ENCODE measurements at regions of chr5 and their contacts with region 1.

Region 1: GRCh38 chr5:134738133-134738962 is at the start of gene CAMLG:
- DNase-seq: peak; percentile 96 to 97 (median 97)
- H3K4me3 ChIP-seq: peak within 1 kb of the TSS; percentile 87 to 97
- H3K4me3 Mint-ChIP-seq: peak within 1 kb of the TSS; percentile 88 to 98 (median 94)
- H3K27ac ChIP-seq: peak within 1 kb of the TSS; percentile 86
- H3K27ac Mint-ChIP-seq: peak within 1 kb of the TSS; percentile 85 to 99 (median 97)
- H3K4me1 ChIP-seq: peaks cover 18% of the 10 kb centered on the region
- H3K4me1 Mint-ChIP-seq: peaks cover 14 to 31% (median 21%) of the 10 kb centered on the region in 4 donors
- H3K27me3 ChIP-seq: no peaks in the 10 kb centered on the region
- H3K27me3 Mint-ChIP-seq: no peaks in the 10 kb centered on the region
- total RNA-seq, gene CAMLG: 26.7 to 33.8 TPM

Region 2: DNA sequence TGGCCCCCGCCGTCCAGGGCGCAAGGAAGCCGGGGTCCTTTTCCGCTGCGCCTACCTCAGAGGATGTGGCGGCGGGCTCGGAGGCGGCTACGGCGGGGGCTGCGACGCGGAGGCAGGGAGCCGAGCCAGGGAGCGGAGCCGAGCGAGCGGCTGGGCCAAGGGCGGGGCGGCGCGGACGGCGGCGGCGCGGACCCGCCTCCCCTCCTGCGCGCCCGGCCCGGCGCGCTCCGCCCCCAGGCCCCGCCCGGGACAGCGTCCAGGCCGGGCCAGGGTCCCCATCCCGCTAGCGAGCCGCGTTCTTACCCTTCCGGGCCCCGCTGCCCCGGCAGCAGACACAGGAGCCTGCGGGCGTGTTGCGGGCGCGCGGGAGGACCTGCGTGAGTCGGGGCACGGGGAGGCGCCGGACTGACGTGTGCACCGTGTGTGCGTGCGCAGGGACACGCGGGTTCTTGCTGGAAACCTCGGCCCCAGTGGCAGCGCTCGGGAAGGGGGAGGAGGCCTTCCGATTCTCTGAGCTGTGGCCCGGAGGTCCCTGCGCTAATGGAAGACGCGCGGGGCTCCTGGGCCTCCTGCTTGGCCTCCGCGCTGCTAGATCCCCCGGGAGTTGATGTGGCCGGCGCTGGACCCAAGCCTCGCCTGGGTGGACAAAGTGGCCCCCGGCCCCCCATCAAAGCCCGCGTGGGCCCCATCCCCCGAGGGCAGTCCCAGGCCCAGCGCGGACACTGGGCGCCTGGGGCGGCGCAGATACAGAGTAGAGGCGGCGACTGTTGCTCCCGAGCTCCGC is 733.6 kb before region 1 on chr5 and contains the start of gene VDAC1:
- CTCF ChIA-PET with region 1: no interaction called
- POLR2A ChIA-PET with region 1: no interaction called
- intact Hi-C with region 1: loop called (anchors 10 kb)
- DNase-seq: peak; percentile 89 to 95 (median 92)
- H3K4me3 ChIP-seq: peak within 1 kb of the TSS; percentile 61 to 81
- H3K4me3 Mint-ChIP-seq: peak within 1 kb of the TSS; percentile 89 to 99 (median 93)
- H3K27ac ChIP-seq: peak within 1 kb of the TSS; percentile 96
- H3K27ac Mint-ChIP-seq: peak within 1 kb of the TSS; percentile 96 to 99 (median 98)
- H3K4me1 ChIP-seq: peaks cover 49% of the 10 kb centered on the region
- H3K4me1 Mint-ChIP-seq: peaks cover 26 to 50% (median 38%) of the 10 kb centered on the region in 4 donors
- H3K27me3 ChIP-seq: no peaks in the 10 kb centered on the region
- H3K27me3 Mint-ChIP-seq: no peaks in the 10 kb centered on the region
- total RNA-seq, gene VDAC1: 45.1 to 46.4 TPM

Region 3: DNA sequence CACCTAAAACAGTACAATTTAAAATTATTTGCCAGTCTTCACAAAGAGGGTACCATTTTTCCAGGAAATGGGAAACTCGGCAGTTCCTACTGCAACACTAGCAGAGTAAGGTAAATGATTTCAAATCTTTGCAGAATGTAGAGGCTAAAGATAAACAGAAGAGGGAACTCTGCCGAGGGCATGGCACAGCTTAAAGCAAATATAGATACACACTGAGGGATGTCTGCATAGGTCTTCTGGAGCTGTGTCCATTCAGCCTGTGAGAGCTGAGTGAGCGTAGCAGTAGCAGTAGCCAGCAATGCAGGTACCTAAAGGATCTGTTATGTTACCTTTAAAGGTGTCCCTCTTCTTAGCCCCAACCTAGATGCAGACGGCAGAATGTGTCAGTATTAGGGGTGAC is 388.9 kb before region 1 on chr5:
- CTCF ChIA-PET with region 1: no interaction called
- POLR2A ChIA-PET with region 1: no interaction called
- intact Hi-C with region 1: no loop called
- DNase-seq: no peak
- H3K4me3 ChIP-seq: no peak overlapping the region
- H3K4me3 Mint-ChIP-seq: no peak overlapping the region
- H3K27ac ChIP-seq: no peak overlapping the region
- H3K27ac Mint-ChIP-seq: no peak overlapping the region
- H3K4me1 ChIP-seq: no peaks in the 10 kb centered on the region
- H3K4me1 Mint-ChIP-seq: no peaks in the 10 kb centered on the region
- H3K27me3 ChIP-seq: no peaks in the 10 kb centered on the region
- H3K27me3 Mint-ChIP-seq: no peaks in the 10 kb centered on the region

Region 4: GRCh38 chr5:134370871-134371833 is 367.2 kb before region 1 on chr5 and contains the start of gene UBE2B:
- CTCF ChIA-PET with region 1: interaction called, 3 read pairs
- POLR2A ChIA-PET with region 1: interaction called, 6 read pairs
- intact Hi-C with region 1: loop called (anchors 1 kb)
- DNase-seq: peak; percentile 98 to 99 (median 98)
- H3K4me3 ChIP-seq: peak within 1 kb of the TSS; percentile 86 to 92
- H3K4me3 Mint-ChIP-seq: peak within 1 kb of the TSS; percentile 96 to 99 (median 98)
- H3K27ac ChIP-seq: peak within 1 kb of the TSS; percentile 99
- H3K27ac Mint-ChIP-seq: peak within 1 kb of the TSS; percentile 97 to 100 (median 100)
- H3K4me1 ChIP-seq: peaks cover 52% of the 10 kb centered on the region
- H3K4me1 Mint-ChIP-seq: peaks cover 40 to 78% (median 49%) of the 10 kb centered on the region in 4 donors
- H3K27me3 ChIP-seq: no peaks in the 10 kb centered on the region
- H3K27me3 Mint-ChIP-seq: peaks cover 0 to 5% of the 10 kb centered on the region in 2 donors
- total RNA-seq, gene UBE2B: 121 to 124 TPM

Region 5: GRCh38 chr5:134648425-134649162 is 89.8 kb before region 1 on chr5 and contains the start of gene SEC24A:
- CTCF ChIA-PET with region 1: no interaction called
- POLR2A ChIA-PET with region 1: interaction called, 4 read pairs
- intact Hi-C with region 1: loop called (anchors 1 kb)
- DNase-seq: peak; percentile 88 to 93 (median 90)
- H3K4me3 ChIP-seq: peak within 1 kb of the TSS; percentile 94 to 96
- H3K4me3 Mint-ChIP-seq: peak within 1 kb of the TSS; percentile 89 to 100 (median 97)
- H3K27ac ChIP-seq: peak within 1 kb of the TSS; percentile 99
- H3K27ac Mint-ChIP-seq: peak within 1 kb of the TSS; percentile 96 to 100 (median 99)
- H3K4me1 ChIP-seq: peaks cover 23% of the 10 kb centered on the region
- H3K4me1 Mint-ChIP-seq: peaks cover 16 to 33% (median 23%) of the 10 kb centered on the region in 4 donors
- H3K27me3 ChIP-seq: no peaks in the 10 kb centered on the region
- H3K27me3 Mint-ChIP-seq: no peaks in the 10 kb centered on the region
- total RNA-seq, gene SEC24A: 16.1 to 16.6 TPM

Region 6: GRCh38 chr5:134758504-134759341 is 20.4 kb after region 1 on chr5 and contains the start of gene DDX46:
- CTCF ChIA-PET with region 1: interaction called, 76 read pairs
- POLR2A ChIA-PET with region 1: interaction called, 82 read pairs
- intact Hi-C with region 1: loop called (anchors 1 kb)
- DNase-seq: peak; percentile 92 to 93 (median 92)
- H3K4me3 ChIP-seq: peak within 1 kb of the TSS; percentile 82 to 84
- H3K4me3 Mint-ChIP-seq: peak within 1 kb of the TSS; percentile 99 to 100 (median 100)
- H3K27ac ChIP-seq: peak within 1 kb of the TSS; percentile 83
- H3K27ac Mint-ChIP-seq: peak within 1 kb of the TSS; percentile 86 to 99 (median 98)
- H3K4me1 ChIP-seq: peaks cover 25% of the 10 kb centered on the region
- H3K4me1 Mint-ChIP-seq: peaks cover 28 to 44% (median 38%) of the 10 kb centered on the region in 4 donors
- H3K27me3 ChIP-seq: no peaks in the 10 kb centered on the region
- H3K27me3 Mint-ChIP-seq: no peaks in the 10 kb centered on the region
- total RNA-seq, gene DDX46: 59.9 to 66.8 TPM

Region 7: GRCh38 chr5:134769206-134769605 is 30.9 kb after region 1 on chr5:
- CTCF ChIA-PET with region 1: no interaction called
- POLR2A ChIA-PET with region 1: no interaction called
- intact Hi-C with region 1: no loop called
- DNase-seq: no peak
- H3K4me3 ChIP-seq: no peak overlapping the region
- H3K4me3 Mint-ChIP-seq: no peak overlapping the region
- H3K27ac ChIP-seq: no peak overlapping the region
- H3K27ac Mint-ChIP-seq: no peak overlapping the region
- H3K4me1 ChIP-seq: no peaks in the 10 kb centered on the region
- H3K4me1 Mint-ChIP-seq: peaks cover 0 to 1% (median 0%) of the 10 kb centered on the region in 4 donors
- H3K27me3 ChIP-seq: no peaks in the 10 kb centered on the region
- H3K27me3 Mint-ChIP-seq: no peaks in the 10 kb centered on the region

Region 8: GRCh38 chr5:134787692-134788091 is 49.3 kb after region 1 on chr5:
- CTCF ChIA-PET with region 1: no interaction called
- POLR2A ChIA-PET with region 1: no interaction called
- intact Hi-C with region 1: no loop called
- DNase-seq: no peak
- H3K4me3 ChIP-seq: no peak overlapping the region
- H3K4me3 Mint-ChIP-seq: no peak overlapping the region
- H3K27ac ChIP-seq: no peak overlapping the region
- H3K27ac Mint-ChIP-seq: no peak overlapping the region
- H3K4me1 ChIP-seq: no peaks in the 10 kb centered on the region
- H3K4me1 Mint-ChIP-seq: no peaks in the 10 kb centered on the region
- H3K27me3 ChIP-seq: no peaks in the 10 kb centered on the region
- H3K27me3 Mint-ChIP-seq: no peaks in the 10 kb centered on the region

Region 9: DNA sequence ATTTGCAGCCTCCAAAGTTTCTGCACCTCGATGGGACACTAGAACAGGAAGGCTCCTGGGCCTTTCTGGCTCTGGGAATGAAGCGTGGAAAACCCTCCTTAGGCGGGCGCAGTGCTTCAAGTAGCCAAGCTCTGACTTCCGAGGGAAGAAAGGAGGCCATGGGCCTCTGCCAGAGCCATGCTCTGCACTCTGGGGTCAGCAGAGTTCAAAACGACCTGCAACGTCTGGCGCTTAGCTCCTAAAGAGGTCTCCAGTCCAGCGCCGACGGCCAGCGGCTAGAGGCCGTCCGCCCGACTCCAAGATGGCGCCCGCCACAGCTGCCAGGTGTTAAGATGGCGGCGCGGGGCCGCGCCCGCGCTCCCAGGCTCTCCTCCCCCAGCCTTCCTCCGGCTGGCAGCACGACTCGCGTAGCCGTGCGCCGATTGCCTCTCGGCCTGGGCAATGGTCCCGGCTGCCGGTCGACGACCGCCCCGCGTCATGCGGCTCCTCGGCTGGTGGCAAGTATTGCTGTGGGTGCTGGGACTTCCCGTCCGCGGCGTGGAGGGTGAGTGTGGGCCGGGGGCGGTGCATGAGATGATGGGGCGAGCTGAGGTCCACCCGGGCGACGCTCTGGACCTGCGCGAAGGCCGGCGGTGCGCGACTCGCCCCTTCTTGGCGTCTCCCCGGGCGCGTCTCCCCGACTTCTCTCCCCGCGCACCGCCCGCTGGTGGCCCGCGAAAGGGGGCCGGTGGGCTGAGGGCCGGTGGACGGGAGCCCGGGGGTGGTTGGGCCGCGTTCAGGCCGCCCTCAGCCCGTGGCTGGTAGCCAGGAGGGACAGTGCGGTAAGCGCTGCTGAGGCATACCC is 135.9 kb after region 1 on chr5 and contains the start of gene TXNDC15:
- CTCF ChIA-PET with region 1: no interaction called
- POLR2A ChIA-PET with region 1: interaction called, 15 read pairs
- intact Hi-C with region 1: loop called (anchors 1 kb)
- DNase-seq: peak; percentile 79 to 84 (median 81)
- H3K4me3 ChIP-seq: peak within 1 kb of the TSS; percentile 90 to 91
- H3K4me3 Mint-ChIP-seq: peak within 1 kb of the TSS; percentile 93 to 98 (median 94)
- H3K27ac ChIP-seq: peak within 1 kb of the TSS; percentile 78
- H3K27ac Mint-ChIP-seq: peak within 1 kb of the TSS; percentile 86 to 97 (median 96)
- H3K4me1 ChIP-seq: peaks cover 33% of the 10 kb centered on the region
- H3K4me1 Mint-ChIP-seq: peaks cover 26 to 49% (median 39%) of the 10 kb centered on the region in 4 donors
- H3K27me3 ChIP-seq: no peaks in the 10 kb centered on the region
- H3K27me3 Mint-ChIP-seq: no peaks in the 10 kb centered on the region
- total RNA-seq, gene TXNDC15: 42.8 to 52.0 TPM